ENCODE measurements at regions of chr10 and their contacts with region 1.

Region 1: GRCh38 chr10:15427843-15428414 is 56.8 kb upstream of the FAM171A1 start:
- DNase-seq: peak in 1 of 2 experiments; percentile 58
- ATAC-seq: peak; percentile 54 to 83; a peak in 3 of 6 replicates
- H3K4me3 ChIP-seq: no peak overlapping the region
- H3K27ac ChIP-seq: no peak overlapping the region
- H3K4me1 ChIP-seq: no peaks in the 10 kb centered on the region
- CTCF ChIP-seq: peak; percentile 75
- EP300 ChIP-seq: no peak
- POLR2A ChIP-seq: no peak
- RAD21 ChIP-seq: peak; percentile 75 to 80

Region 2: DNA sequence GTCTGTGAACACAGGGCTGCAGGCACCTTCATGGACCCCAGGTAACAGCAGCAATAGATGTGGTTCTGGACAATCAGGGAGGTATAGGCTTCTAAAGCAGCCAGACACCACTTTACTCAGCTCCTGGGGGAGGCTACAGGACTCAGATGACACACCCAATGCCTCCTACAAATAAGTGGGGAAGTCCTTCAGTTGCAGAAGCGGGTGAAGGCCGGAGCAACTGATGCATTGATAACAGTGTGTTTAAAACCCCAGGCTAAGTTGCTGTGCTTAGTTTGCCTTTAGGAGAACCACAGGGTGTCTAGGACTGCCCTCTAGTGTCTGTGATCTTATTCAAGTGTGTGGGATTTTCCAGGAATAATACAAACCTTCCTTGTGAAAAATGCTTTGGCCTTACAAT is 297.7 kb after region 1 on chr10:
- CTCF ChIA-PET with region 1: interaction called, 16 read pairs
- POLR2A ChIA-PET with region 1: no interaction called
- DNase-seq: peak; percentile 44 to 53
- ATAC-seq: peak; percentile 88 to 89
- H3K4me3 ChIP-seq: no peak overlapping the region
- H3K27ac ChIP-seq: no peak overlapping the region
- H3K4me1 ChIP-seq: no peaks in the 10 kb centered on the region
- CTCF ChIP-seq: peak; percentile 71
- EP300 ChIP-seq: no peak
- POLR2A ChIP-seq: no peak
- RAD21 ChIP-seq: peak; percentile 70 to 71